AG04450 (cell line): ENCODE measurements at regions of chr11 and their contacts with region 1.

Region 1: DNA sequence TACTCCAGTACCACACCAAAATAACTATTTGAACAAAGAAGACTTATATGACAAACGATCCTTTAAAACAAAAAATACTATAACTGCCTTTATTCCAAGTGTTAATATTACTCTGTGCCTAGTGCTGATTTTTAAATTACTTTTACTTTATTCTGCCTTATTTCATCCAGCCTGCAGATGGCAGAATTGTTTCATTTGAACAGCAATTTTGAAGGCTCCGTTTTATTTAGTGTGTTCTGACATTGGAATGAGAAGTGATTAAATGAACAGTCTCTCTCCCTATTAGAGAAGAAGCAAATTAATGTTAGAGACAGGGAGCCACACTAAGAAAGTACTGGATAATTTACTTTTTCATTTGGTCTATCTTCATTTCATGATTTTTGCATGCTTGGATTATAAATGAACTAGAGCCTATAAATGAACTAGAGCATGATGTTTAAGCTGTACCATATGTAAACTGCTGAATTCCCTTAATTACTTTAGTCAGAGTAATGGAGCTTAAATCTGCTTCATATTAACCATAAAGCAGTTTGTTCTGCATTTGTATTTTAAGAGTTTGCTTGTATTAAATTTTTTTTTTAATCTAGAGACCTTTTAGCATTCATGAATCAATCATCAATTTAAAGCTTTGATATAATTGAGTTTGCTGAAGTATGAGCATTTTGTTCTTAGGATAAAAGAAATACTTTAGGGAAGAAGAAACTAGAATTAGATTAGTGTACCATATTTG is 9.8 kb downstream of the PDHX start:
- DNase-seq: no peak
- H3K4me3 ChIP-seq: no peak overlapping the region
- H3K27ac ChIP-seq: no peak overlapping the region
- H3K27me3 ChIP-seq: no peaks in the 10 kb centered on the region
- CTCF ChIP-seq: peak; percentile 70

Region 2: DNA sequence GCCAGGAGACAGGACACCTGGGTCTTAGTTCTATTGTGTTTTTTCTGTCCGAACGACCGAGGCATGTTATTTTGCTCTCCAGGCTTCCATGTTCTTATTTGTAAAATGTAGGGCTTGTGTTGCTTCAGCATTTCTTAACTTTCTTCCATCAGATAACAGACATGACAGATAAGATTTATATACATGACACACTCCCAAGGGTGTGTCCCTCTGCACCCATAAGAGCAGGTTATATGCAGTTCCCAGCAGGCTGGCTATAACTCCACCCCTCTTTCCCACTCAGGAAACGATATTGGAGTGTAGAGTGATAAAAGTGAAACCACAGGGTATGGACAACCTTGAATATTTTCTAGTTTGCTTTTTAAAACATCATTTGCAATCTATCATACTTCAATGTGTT is 75.9 kb before region 1 on chr11:
- CTCF ChIA-PET with region 1: no interaction called
- POLR2A ChIA-PET with region 1: no interaction called
- DNase-seq: no peak
- H3K4me3 ChIP-seq: no peak overlapping the region
- H3K27ac ChIP-seq: no peak overlapping the region
- H3K27me3 ChIP-seq: peaks cover 2% of the 10 kb centered on the region
- CTCF ChIP-seq: no peak

Region 3: DNA sequence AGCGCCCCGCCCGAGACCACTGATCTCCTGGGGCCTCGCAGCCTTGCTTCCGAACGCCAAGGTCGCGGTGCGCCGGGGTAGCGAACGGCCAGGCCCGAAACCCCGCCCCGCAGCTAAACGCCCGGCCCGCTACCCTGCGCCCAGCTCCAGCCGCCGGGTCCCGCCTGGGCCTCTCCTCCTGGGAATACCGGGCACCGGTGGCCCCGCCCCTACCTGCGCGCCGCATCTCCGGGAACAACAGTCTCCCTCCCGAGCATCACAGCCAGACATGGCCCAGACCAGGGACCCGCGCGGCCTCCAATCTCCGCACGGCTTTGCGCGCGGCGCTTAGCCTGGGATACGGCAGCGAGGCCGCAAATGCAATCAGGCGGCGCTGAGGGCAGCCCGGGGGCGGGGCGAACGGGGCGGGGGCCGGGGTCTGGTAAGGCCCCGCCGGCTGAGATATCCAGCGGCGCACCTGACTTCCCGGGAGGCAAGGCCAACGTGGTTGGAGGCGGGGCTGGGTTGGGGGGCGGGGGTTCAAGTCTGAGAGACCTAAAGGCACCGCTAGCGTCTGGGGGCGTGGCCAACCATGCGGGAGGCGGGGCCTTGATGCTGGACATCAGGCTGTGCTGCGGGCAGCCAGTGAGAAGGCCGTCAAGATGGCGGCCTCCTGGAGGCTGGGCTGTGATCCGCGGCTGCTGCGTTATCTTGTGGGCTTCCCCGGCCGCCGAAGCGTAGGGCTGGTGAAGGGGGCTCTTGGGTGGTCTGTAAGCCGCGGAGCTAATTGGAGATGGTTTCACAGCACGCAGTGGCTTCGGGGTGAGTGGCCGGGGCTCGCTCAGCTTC is 10.0 kb before region 1 on chr11 and contains the starts of genes APIP and PDHX:
- CTCF ChIA-PET with region 1: interaction called, 15 read pairs
- POLR2A ChIA-PET with region 1: no interaction called
- DNase-seq: peak; percentile 93
- H3K4me3 ChIP-seq: peak within 1 kb of the TSS; percentile 96
- H3K27ac ChIP-seq: peak within 1 kb of the TSS; percentile 93
- H3K27me3 ChIP-seq: no peaks in the 10 kb centered on the region
- CTCF ChIP-seq: no peak
- polyA plus RNA-seq, gene APIP: 15.0 and 20.1 TPM in 2 replicates
- polyA plus RNA-seq, gene PDHX: 49.6 and 68.8 TPM in 2 replicates

Region 4: DNA sequence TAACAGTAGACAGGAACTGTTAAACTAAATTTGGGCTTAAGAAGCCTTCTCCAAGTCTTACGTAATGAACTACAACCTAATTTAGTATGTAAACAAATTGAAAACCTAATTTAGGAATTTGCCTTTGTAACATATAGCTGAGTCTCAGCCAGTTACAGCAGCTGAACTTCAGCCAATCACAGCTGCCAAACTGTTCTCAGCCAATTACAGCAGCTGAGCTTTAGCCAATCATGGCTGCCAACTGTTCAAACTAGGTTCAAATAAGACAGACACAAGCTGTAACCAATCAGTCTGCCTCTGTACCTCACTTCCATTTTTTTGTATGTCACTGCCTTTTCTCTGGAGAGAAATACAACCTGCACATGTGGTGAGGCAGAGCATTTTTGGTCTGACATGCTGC is 117.7 kb after region 1 on chr11:
- CTCF ChIA-PET with region 1: no interaction called
- POLR2A ChIA-PET with region 1: no interaction called
- DNase-seq: no peak
- H3K4me3 ChIP-seq: no peak overlapping the region
- H3K27ac ChIP-seq: no peak overlapping the region
- H3K27me3 ChIP-seq: no peaks in the 10 kb centered on the region
- CTCF ChIP-seq: no peak

Region 5: DNA sequence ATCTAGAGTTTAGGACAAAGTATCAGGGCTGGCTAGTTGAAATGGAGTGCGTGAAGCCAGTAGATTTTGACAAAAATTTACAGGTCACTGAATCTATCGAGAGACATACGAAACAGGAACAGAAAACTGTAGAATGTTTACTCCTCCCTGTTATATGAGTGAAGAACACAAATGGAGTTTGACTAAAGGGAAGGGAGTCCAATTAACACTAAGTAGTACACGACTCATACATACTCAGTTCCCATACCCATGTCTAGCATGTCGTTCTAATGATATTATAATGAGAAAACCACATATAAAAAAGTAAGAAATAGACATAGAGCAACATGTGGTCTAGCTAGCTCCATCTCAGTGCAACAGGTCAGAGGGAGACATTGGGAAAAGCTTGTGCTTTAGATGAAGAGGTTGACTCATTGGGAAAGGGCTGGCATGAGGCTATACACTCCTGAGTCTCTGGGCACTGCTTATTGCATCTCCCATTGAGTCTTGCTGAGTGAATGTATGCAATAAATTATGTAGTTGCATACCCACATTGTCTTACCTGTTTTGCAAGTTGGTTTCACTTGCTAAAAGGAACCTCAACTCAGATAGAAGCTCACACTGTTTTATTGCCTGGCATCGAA is 256.2 kb after region 1 on chr11:
- CTCF ChIA-PET with region 1: interaction called, 10 read pairs
- POLR2A ChIA-PET with region 1: no interaction called
- DNase-seq: no peak
- H3K4me3 ChIP-seq: no peak overlapping the region
- H3K27ac ChIP-seq: peak overlapping the region; percentile 43
- H3K27me3 ChIP-seq: no peaks in the 10 kb centered on the region
- CTCF ChIP-seq: no peak

Region 6: DNA sequence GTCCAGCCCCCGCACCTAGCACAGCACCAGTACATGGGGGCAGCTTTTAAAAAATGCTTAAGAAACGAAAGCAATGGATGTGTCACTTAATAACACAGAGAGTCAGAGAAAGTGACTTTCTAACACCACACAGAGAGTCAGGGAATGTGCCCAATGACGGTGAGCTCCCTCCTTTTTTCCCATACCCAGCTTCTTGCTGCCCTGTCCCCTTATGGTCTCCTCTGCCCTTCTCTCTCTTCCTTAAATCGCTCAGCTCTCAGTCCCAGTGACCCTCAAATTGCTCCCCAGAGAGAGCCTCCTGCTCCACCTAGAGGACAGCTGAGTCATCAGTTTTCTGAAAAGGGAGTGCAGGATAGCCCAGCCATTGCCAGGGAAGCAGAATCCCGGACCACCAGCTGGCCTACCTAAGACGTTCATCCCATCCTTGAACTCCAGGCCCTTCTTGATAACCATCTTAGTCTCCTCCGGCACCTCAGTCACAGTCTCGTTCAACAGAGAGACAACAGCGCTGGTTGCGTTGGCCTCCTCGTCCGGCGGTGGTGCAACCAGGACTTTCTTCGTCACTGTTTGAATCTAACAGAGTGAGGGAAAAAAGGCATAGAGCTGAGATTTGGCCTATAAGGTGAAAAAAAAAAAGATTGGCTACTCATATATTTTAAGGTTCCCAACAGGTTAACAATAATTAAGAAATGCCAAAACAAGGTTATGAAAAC is 379.6 kb after region 1 on chr11:
- CTCF ChIA-PET with region 1: interaction called, 11 read pairs
- POLR2A ChIA-PET with region 1: no interaction called
- DNase-seq: no peak
- H3K4me3 ChIP-seq: no peak overlapping the region
- H3K27ac ChIP-seq: no peak overlapping the region
- H3K27me3 ChIP-seq: no peaks in the 10 kb centered on the region
- CTCF ChIP-seq: peak; percentile 68

Region 7: DNA sequence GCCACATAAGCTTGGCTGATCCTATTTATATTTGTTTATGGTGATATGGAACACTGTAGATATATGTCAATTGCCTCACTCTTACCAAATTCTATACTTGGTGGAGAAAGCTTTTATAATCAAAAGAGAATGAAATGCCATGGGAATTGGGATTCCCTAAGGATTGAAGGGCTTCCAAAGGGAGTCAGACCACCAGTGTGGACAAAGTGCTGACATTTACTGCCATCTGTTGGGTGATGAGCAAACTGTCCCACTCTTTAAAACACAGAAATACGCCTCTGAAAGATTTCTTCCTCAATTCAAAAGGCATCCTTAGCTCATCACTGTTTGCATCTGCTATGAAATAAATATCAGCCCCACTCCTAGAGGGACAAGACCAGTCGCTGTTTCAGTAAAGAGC is 486.0 kb after region 1 on chr11:
- CTCF ChIA-PET with region 1: interaction called, 10 read pairs
- POLR2A ChIA-PET with region 1: no interaction called
- DNase-seq: no peak
- H3K4me3 ChIP-seq: no peak overlapping the region
- H3K27ac ChIP-seq: no peak overlapping the region
- H3K27me3 ChIP-seq: peaks cover 5% of the 10 kb centered on the region
- CTCF ChIP-seq: peak; percentile 60